ENCODE measurements at regions of chr12 and their contacts with region 1.

Region 1: DNA sequence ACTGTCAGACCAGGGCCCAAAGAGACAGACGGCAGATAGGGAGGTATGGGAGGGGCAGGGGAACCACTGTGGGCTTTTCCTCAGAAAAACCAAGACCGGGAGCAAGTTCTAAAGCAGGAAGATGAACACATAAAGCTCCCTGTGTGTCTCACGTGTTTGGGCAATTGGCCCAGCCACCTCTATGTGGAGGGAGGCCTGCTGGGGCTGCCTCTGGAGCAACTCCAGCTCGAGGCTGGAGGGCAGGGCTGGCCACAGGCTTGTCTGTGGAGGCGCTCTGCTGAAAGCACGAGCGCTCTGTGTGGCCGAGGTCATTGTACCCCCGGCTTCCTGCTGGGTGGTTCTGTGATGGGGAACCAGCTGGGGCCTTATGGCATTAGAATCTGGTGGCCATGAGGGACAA is 36.4 kb downstream of the TRAFD1 start:
- DNase-seq: peak in 4 of 10 donors; percentile 16 to 30 (median 24)
- H3K4me3 ChIP-seq: no peak overlapping the region
- H3K27ac ChIP-seq: peak overlapping the region in 44 of 59 donors; percentile 4 to 78 (median 58)
- H3K27me3 ChIP-seq: no peaks in the 10 kb centered on the region
- CTCF ChIP-seq: no peak

Region 2: DNA sequence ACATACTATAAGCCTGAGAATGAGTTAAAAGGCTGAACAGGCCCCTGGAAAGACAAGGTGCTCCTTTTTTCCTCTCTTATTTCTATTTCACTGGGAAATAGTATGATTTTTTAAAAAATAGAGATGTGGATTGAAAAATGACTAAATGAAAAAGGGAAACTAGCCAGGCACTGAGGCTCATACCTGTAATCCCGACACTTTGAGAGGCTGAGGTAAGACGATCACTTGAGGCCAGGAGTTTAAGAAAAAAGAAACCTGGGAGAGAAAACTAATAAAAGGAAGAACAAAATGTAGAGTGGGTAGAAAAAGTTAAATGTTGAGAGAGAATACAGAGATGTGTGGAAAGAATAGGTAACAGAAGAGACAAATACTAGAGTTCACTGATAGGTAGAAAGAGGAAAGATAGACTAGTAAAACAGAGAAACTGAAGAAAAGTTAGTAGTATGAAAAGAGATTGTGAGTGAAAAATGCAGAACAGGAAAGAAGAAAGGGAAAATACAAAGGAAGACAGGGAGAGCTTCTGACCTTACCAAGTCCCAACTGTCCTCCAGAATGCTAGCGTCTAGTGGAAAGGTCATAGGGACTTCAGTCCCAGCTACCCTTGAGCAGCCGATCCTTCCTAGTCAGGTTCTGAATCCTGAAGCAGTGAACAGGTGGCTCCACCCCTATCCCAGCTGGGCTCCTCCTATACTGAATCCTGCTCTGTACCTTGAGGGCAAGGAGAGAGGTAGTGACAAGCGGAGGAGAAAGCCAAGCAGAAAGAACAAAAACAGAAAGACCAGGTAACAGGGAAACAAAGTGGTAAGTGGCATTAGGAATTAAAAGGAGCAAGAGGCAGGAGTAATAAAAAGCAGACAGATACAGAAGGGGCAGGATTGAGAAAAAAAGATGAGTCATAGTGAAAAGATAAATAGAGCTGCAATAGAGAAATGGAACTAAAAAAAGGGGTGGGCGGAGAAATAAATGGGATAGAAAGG is 156.0 kb before region 1 on chr12:
- intact Hi-C with region 1: no loop called
- DNase-seq: no peak
- H3K4me3 ChIP-seq: no peak overlapping the region
- H3K27ac ChIP-seq: no peak overlapping the region
- H3K27me3 ChIP-seq: no peaks in the 10 kb centered on the region
- CTCF ChIP-seq: no peak

Region 3: DNA sequence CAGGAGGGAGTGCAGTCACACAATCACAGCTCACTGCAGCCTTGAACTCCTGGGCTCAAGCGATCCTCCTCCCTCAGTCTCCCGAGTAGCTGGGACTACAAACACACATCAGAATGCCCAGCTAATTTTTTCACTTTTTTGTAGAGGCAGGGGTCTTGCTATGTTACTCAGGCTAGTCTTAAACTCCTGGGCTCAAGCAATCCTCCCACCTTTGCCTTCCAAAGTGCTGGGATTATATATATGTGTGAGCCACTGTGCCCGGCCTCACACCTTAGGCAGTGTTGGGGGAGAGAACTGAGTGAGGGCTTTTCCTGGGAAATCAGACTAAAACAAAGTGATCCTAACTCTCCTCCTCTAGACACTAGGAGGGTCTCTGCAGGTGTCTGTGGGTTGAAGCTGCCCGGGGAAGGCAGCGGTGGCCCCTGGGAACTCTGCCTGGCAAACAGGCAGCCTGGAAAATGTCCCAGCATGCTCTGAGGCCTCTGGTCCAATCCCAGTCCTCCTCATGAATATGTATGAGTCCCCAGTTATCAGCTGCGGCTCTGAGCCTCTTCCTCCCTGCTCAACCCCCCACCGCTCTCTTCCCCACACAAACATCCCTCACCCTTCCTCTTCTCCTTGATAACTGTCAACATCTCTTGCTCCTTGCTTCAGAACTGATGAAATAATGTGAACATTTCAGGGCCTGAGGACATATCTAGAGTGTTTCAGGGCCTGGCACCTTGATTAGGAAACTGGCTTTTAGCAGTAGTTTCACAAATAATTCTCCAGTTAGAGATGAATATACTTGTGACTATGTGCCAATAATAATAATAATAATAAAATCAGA is 45.3 kb before region 1 on chr12:
- intact Hi-C with region 1: loop called in 1 of 2 experiments (anchors 10 kb)
- DNase-seq: peak; percentile 39 to 91 (median 85)
- H3K4me3 ChIP-seq: peak overlapping the region in 55 of 59 donors; percentile 3 to 50 (median 31)
- H3K27ac ChIP-seq: peak overlapping the region; percentile 53 to 98 (median 93)
- H3K27me3 ChIP-seq: no peaks in the 10 kb centered on the region
- CTCF ChIP-seq: peak in 3 of 56 donors; percentile 9 to 23 (median 11)

Measured in dorsolateral prefrontal cortex (tissue), 120 donors.